ENCODE measurements at regions of chr7 and their contacts with region 1.

Region 1: DNA sequence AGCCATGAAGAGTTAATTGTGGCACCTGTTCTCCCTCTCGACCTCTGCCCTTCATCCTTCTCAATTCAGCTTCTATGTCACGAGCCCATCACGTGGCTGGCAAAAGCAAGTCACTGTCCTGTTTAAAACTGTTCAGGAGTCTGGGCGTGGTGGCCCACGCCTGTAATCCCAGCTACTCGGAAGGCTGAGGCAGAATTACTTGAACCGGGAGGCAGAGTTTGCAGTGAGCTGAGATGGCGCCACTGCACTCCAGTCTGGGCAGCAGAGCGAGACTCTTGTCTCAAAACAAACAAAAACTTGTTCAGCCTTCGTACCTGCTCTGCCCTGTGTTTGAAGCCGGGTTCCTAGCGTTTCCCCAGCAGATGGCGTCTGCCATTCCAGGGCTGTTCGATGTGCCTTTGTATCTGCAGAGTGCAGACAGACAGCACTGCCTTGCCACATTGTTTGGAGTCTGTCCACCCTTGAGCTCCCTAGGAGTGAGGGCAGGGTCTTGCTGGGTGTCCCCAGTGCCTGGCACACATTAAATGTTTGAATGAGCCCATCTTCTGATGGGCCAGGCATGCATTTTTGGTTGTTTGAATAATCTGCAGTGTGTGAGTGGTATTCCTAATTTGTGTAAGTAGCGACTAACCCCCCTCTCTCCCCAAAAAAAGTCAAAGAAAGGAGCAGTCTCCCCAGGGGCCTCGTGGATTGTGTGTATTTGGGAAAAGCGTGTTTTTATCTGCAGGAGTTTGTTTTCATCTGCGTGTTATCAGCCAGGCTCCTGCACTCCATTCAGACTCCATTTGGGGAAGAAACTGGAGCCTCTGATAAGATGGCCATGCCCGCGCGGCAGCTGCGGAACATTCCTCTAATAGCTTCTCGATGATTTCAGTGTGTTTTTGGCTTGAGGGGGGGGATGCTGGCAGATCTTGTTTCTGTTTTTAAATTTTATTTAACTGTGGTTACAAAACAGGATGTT is 61.2 kb downstream of the DNAJB6 start:
- DNase-seq: peak; percentile 70 to 73
- H3K4me3 ChIP-seq: no peak overlapping the region
- H3K27ac ChIP-seq: peak overlapping the region in 2 of 3 donors; percentile 49 to 61
- H3K4me1 ChIP-seq: peaks cover 7 to 17% of the 10 kb centered on the region in 2 donors
- H3K27me3 ChIP-seq: no peaks in the 10 kb centered on the region
- CTCF ChIP-seq: peak in 5 of 6 experiments; percentile 16 to 50 (median 45)
- POLR2A ChIP-seq: no peak

Region 2: DNA sequence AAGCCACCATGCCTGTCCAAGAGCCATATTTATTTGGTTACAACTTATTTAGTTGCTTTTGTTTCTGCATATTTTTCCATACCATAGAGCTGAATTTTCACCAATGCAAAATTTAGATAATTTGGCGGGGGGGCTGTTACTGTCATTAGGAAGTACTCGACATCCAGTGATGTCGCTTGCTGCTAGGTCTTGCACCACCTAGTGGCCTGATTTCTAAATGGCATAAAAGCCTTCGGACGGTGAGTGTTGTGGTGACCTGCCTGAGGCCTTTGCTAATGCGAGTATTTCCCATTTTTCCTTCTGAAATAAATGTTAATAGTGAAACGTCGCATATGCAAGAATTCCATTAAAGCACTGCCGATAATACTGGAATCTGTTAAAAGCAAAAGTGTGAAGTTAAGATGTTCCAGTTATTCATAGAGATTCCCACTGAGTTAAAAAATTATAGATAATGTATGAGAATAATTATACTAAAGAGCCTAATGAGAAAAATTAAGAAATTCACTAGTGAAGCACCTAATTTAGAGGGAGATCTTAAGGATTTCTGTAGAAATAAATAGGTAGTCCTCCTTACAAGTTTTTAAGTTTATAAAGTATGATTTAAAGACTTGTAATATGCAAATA is 147.3 kb before region 1 on chr7:
- intact Hi-C with region 1: loop called (anchors 10 kb)
- DNase-seq: peak in 1 of 2 donors; percentile 26
- H3K4me3 ChIP-seq: no peak overlapping the region
- H3K27ac ChIP-seq: no peak overlapping the region
- H3K4me1 ChIP-seq: peaks cover 4 to 6% of the 10 kb centered on the region in 2 donors
- H3K27me3 ChIP-seq: no peaks in the 10 kb centered on the region
- CTCF ChIP-seq: peak; percentile 28 to 79 (median 48)
- POLR2A ChIP-seq: no peak

Region 3: GRCh38 chr7:157474689-157475088 is 76.7 kb after region 1 on chr7:
- intact Hi-C with region 1: no loop called
- DNase-seq: no peak
- H3K4me3 ChIP-seq: no peak overlapping the region
- H3K27ac ChIP-seq: no peak overlapping the region
- H3K4me1 ChIP-seq: no peaks in the 10 kb centered on the region
- H3K27me3 ChIP-seq: no peaks in the 10 kb centered on the region
- CTCF ChIP-seq: peak in 1 of 6 experiments; percentile 24
- POLR2A ChIP-seq: no peak

Measured in thyroid gland (tissue), 4 donors.